Ascending aorta (tissue), 2 donors: ENCODE measurements at regions of chr1 and their contacts with region 1.

Region 1: GRCh38 chr1:31663622-31664452 is 19.2 kb upstream of the PEF1 start:
- DNase-seq: peak in 1 of 2 donors; percentile 81
- H3K4me3 ChIP-seq: no peak overlapping the region
- H3K27ac ChIP-seq: no peak overlapping the region
- H3K4me1 ChIP-seq: peaks cover 0 to 3% of the 10 kb centered on the region in 2 donors
- H3K27me3 ChIP-seq: no peaks in the 10 kb centered on the region
- CTCF ChIP-seq: peak; percentile 89 to 98 (median 90)

Region 2: GRCh38 chr1:31745096-31745945 is 81.5 kb after region 1 on chr1:
- intact Hi-C with region 1: loop called (anchors 1 kb)
- DNase-seq: peak in 1 of 2 donors; percentile 81
- H3K4me3 ChIP-seq: no peak overlapping the region
- H3K27ac ChIP-seq: no peak overlapping the region
- H3K4me1 ChIP-seq: peaks cover 0 to 3% of the 10 kb centered on the region in 2 donors
- H3K27me3 ChIP-seq: no peaks in the 10 kb centered on the region
- CTCF ChIP-seq: peak; percentile 39 to 75 (median 66)

Region 3: DNA sequence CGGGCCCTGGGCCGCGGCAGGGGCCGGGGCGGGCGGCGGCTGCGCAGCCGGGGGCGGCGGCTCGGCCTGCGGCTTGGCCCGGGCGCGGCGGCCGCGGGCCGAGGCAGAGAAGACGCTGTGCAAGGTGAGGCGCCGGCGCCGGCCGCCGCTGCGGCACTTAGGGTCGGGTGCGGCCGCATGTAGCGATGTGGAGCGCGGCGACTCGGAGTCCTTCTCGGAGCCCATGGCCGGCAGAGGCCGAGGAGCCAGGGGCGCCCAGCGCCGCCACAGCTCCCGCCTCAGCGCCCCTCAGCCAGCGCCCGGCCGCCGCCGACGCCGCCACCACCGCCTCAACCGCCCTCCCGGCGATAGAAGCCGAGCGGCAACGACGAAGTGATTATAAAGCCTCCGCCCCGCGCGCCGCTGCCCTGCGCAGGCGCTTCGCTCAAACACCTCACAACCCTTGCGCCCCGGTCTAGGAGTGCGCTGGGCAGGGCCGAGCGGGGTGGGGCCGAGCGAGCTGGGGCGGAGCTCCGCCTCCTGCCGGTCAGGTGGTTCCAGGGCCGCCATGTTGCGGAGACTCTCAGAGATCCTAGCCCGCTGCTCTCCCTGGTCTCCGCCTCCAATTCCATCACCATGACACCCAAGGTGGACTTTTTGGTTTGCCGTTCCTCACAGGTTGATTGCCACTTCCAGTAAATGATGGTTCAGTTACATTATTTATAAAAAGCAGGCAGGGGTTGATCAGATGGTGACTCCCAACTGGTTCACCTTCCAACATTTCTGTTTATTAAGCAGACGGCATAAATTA is 1300.8 kb after region 1 on chr1 and contains the start of gene RNF19B:
- intact Hi-C with region 1: no loop called
- DNase-seq: peak; percentile 77 to 98
- H3K4me3 ChIP-seq: peak within 1 kb of the TSS; percentile 99 to 100
- H3K27ac ChIP-seq: peak within 1 kb of the TSS; percentile 93 to 99
- H3K4me1 ChIP-seq: peaks cover 0 to 22% of the 10 kb centered on the region in 2 donors
- H3K27me3 ChIP-seq: no peaks in the 10 kb centered on the region
- CTCF ChIP-seq: peak in 2 of 3 experiments; percentile 24 to 25
- total RNA-seq, gene RNF19B: 40.0 TPM